ENCODE measurements at regions of chr1 and their contacts with region 1.

Region 1: GRCh38 chr1:182614796-182615454 is 10.7 kb upstream of the RGS16 start:
- DNase-seq: peak; percentile 65
- ATAC-seq: peak; percentile 38
- H3K4me3 Mint-ChIP-seq: peak overlapping the region; percentile 57
- H3K27ac Mint-ChIP-seq: peak overlapping the region; percentile 44
- H3K4me1 Mint-ChIP-seq: peaks cover 47% of the 10 kb centered on the region
- H3K27me3 Mint-ChIP-seq: peaks cover 80% of the 10 kb centered on the region

Region 2: DNA sequence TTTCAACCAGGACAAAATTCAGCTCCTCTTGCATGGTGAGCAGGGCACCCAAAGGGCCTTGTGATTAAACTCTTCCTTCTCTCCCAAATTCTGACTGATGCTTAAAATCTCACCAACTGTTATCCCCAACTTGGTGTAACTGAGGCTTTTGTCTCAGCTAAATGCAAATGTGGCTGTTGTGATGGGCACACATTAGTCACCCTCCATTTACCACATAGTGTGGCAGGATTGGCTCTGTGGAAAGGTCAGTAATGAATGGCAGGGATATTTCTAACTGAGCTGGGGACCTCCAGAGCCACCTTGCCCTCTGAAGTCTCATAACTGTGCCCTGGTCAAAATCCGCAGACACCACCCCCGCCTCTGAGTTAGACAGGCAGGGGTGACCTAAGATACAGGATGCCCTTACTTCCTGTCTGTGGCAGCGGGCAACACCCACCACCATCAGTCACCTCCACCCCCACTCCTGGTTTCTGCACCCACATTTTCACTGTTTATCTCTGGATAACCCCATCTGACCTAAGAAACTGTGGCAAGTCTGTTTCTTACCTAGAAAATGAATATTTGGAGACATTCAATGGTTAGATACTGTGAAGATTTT is 14.7 kb after region 1 on chr1:
- CTCF ChIA-PET with region 1: interaction called, 18 read pairs
- DNase-seq: peak; percentile 74
- ATAC-seq: peak; percentile 80
- H3K4me3 Mint-ChIP-seq: no peak overlapping the region
- H3K27ac Mint-ChIP-seq: peak overlapping the region; percentile 1
- H3K4me1 Mint-ChIP-seq: peaks cover 53% of the 10 kb centered on the region
- H3K27me3 Mint-ChIP-seq: peaks cover 52% of the 10 kb centered on the region

Region 3: DNA sequence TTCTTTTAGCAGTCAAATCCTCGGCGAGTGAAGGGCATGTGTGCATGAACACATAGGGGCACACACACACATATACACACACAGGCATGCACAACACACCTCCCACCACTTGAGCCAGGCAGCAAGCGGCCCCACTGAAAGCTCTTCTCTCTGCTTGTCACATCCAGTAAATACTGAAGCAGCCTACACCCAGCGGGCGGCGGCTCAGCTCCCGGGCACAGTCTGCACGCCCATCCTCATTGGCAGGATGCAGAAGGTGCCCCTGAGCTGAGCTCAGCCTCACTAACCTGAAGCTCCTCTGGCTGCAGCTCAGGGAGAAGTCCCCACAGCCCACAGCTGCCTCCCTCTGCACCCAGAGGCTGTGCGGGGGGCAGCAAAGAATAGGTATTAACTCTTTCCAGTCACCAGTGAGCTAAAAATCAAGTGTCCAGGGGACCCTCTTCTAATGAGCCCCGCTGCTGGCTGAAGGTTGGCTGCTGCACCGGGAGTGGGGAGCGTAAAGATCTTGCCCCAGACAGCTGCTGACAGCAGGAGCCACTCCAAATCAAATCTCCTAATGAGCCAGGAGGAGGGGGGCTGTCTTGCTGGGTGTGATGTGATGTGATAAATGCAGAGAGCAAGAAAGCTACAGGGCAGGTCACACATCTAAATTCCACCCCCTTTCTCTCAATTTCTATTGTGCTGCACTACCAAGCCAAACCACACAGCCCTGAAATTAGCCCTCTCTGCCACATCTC is 57.0 kb after region 1 on chr1:
- CTCF ChIA-PET with region 1: no interaction called
- DNase-seq: no peak
- ATAC-seq: no peak
- H3K4me3 Mint-ChIP-seq: no peak overlapping the region
- H3K27ac Mint-ChIP-seq: no peak overlapping the region
- H3K4me1 Mint-ChIP-seq: no peaks in the 10 kb centered on the region
- H3K27me3 Mint-ChIP-seq: peaks cover 47% of the 10 kb centered on the region

Region 4: GRCh38 chr1:182781841-182782586 is 167.1 kb after region 1 on chr1:
- CTCF ChIA-PET with region 1: interaction called, 23 read pairs
- DNase-seq: peak; percentile 78
- ATAC-seq: peak; percentile 83
- H3K4me3 Mint-ChIP-seq: no peak overlapping the region
- H3K27ac Mint-ChIP-seq: no peak overlapping the region
- H3K4me1 Mint-ChIP-seq: peaks cover 13% of the 10 kb centered on the region
- H3K27me3 Mint-ChIP-seq: peaks cover 21% of the 10 kb centered on the region

Region 5: GRCh38 chr1:182789138-182790076 is 174.5 kb after region 1 on chr1 and contains the start of gene NPL:
- CTCF ChIA-PET with region 1: interaction called, 14 read pairs
- DNase-seq: peak; percentile 89
- ATAC-seq: peak; percentile 95
- H3K4me3 Mint-ChIP-seq: peak within 1 kb of the TSS; percentile 82
- H3K27ac Mint-ChIP-seq: peak within 1 kb of the TSS; percentile 57
- H3K4me1 Mint-ChIP-seq: peaks cover 15% of the 10 kb centered on the region
- H3K27me3 Mint-ChIP-seq: peaks cover 31% of the 10 kb centered on the region
- total RNA-seq, gene NPL: 1.8 to 10.1 TPM